Activated B cell treated with CpG ODN at 0.5 μM for 24 hours (primary cell): ENCODE measurements at regions of chr12 and their contacts with region 1.

Region 1: GRCh38 chr12:48795480-48796455 is 6.9 kb upstream of the ADCY6 start:
- DNase-seq: peak; percentile 42
- ATAC-seq: peak; percentile 85
- H3K4me3 Mint-ChIP-seq: no peak overlapping the region
- H3K27ac Mint-ChIP-seq: no peak overlapping the region
- H3K4me1 Mint-ChIP-seq: peaks cover 6% of the 10 kb centered on the region
- H3K27me3 Mint-ChIP-seq: peaks cover 7% of the 10 kb centered on the region
- CTCF ChIP-seq: peak; percentile 44

Region 2: DNA sequence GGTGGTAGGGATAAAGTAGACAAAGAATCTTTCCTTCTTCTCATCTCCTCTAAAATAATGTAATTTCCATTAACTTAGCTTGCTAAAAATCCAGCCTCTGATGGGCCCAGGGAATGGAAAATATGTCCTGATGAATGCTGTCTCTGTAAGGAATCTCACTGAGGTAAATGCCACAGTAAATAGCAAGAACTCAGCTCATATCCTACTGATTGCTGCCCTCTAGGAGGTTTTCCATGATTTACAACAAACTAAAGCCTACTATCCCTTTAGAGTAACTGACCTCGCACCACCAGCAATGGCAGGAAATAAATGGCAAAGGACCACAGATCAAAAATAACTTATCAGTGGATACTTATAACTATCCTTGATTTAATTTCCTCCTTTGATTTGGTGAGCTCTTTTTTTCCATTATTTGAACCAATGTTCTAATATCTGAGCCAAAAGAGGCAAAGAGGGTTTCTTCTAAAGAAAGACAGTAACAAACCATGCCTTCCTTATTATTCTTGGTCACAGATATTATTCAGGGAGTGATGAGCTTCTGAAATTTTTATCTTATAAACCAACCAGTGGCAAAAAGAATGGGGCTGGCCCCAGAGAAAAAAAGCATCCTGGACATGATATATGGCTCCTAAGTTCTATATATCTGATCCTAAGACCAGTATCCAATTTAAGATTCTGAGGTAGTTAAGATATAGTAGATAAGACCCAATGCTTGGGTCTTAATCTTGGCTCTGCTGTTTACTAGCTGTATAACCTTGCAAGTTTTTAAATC is 733.6 kb before region 1 on chr12:
- CTCF ChIA-PET with region 1: no interaction called
- POLR2A ChIA-PET with region 1: no interaction called
- intact Hi-C with region 1: no loop called
- DNase-seq: no peak
- ATAC-seq: no peak
- H3K4me3 Mint-ChIP-seq: no peak overlapping the region
- H3K27ac Mint-ChIP-seq: no peak overlapping the region
- H3K4me1 Mint-ChIP-seq: peaks cover 2% of the 10 kb centered on the region
- H3K27me3 Mint-ChIP-seq: no peaks in the 10 kb centered on the region
- CTCF ChIP-seq: no peak

Region 3: GRCh38 chr12:48542300-48542928 is 253.4 kb before region 1 on chr12:
- CTCF ChIA-PET with region 1: no interaction called
- POLR2A ChIA-PET with region 1: no interaction called
- intact Hi-C with region 1: loop called (anchors 2 kb)
- DNase-seq: no peak
- ATAC-seq: no peak
- H3K4me3 Mint-ChIP-seq: no peak overlapping the region
- H3K27ac Mint-ChIP-seq: no peak overlapping the region
- H3K4me1 Mint-ChIP-seq: no peaks in the 10 kb centered on the region
- H3K27me3 Mint-ChIP-seq: peaks cover 3% of the 10 kb centered on the region
- CTCF ChIP-seq: no peak

Region 4: DNA sequence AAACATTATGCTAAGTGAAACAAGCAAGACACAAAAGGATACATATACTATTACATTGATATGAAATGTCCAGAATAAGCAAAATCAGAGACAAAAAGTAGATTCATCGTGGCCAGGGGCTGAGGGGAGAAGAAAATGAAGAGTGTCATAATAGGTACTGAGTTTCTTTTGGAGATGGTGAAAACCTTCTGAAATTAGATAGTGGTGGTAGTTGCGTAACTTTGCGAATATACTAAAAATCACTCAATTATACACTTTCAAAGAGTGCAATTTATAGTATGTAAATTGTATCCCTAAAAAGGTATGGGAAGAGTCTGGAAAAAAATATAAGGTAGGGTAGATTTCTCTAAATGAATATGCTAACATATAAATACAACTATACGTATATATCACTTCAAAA is 135.9 kb before region 1 on chr12:
- CTCF ChIA-PET with region 1: no interaction called
- POLR2A ChIA-PET with region 1: no interaction called
- intact Hi-C with region 1: no loop called
- DNase-seq: no peak
- ATAC-seq: no peak
- H3K4me3 Mint-ChIP-seq: no peak overlapping the region
- H3K27ac Mint-ChIP-seq: no peak overlapping the region
- H3K4me1 Mint-ChIP-seq: no peaks in the 10 kb centered on the region
- H3K27me3 Mint-ChIP-seq: no peaks in the 10 kb centered on the region
- CTCF ChIP-seq: no peak

Region 5: GRCh38 chr12:48750769-48751735 is 44.7 kb before region 1 on chr12:
- CTCF ChIA-PET with region 1: interaction called, 119 read pairs
- POLR2A ChIA-PET with region 1: interaction called, 14 read pairs
- intact Hi-C with region 1: loop called (anchors 1 kb)
- DNase-seq: no peak
- ATAC-seq: no peak
- H3K4me3 Mint-ChIP-seq: no peak overlapping the region
- H3K27ac Mint-ChIP-seq: no peak overlapping the region
- H3K4me1 Mint-ChIP-seq: no peaks in the 10 kb centered on the region
- H3K27me3 Mint-ChIP-seq: peaks cover 1% of the 10 kb centered on the region
- CTCF ChIP-seq: no peak

Region 6: DNA sequence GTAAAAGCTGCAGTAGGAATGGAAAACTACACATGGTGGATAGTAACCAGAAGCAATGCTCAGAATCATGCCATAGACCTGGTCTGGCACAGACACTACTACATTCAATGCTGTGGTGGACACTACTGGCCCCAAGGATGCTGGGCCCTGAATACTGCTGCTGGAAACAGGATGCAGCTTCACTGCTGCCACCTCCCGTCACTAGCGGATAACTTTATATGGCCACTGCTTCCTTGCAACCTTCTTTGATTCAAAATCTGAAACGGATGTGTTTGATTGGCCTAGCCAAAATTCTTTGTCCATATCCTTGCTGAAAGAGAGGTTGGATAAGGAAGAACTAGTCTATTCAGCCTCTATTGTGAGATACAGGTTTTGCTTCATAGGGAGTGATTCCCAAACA is 37.5 kb before region 1 on chr12:
- CTCF ChIA-PET with region 1: interaction called, 119 read pairs
- POLR2A ChIA-PET with region 1: interaction called, 14 read pairs
- intact Hi-C with region 1: loop called (anchors 1 kb)
- DNase-seq: no peak
- ATAC-seq: no peak
- H3K4me3 Mint-ChIP-seq: no peak overlapping the region
- H3K27ac Mint-ChIP-seq: no peak overlapping the region
- H3K4me1 Mint-ChIP-seq: no peaks in the 10 kb centered on the region
- H3K27me3 Mint-ChIP-seq: no peaks in the 10 kb centered on the region
- CTCF ChIP-seq: no peak

Region 7: DNA sequence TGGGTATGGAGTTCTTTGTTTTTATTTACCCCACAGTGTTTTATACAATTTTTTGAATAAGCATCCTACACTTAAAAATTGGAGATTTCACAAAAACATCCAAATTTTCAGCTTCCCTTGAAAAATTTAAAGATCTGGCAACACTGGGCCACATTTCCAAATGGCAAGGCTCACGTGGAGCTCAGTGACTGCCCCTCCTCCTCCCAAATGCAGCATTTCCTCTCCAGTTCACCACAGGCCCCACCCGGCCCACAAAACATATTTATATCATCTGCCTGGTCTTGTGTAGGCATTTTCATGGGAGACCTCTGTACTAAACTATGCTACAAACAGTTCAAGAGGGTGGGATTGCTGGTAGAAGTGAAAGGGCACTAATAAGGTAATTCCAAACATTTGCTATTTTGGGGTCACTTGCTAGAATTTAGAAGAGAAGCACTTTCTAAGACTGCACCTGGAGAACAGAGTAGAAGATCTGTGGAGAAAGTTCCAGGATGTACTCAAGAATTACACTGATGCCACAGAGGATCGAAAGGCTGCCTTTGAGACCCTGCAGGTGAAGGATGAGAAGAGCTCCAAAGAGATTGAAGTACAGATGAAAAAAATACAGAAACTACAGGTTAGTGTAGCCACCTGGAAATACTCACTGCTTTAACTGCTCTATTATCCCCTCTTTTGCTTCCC is 122.2 kb after region 1 on chr12:
- CTCF ChIA-PET with region 1: no interaction called
- POLR2A ChIA-PET with region 1: no interaction called
- intact Hi-C with region 1: no loop called
- DNase-seq: no peak
- ATAC-seq: no peak
- H3K4me3 Mint-ChIP-seq: peak overlapping the region; percentile 15
- H3K27ac Mint-ChIP-seq: peak overlapping the region; percentile 16
- H3K4me1 Mint-ChIP-seq: peaks cover 21% of the 10 kb centered on the region
- H3K27me3 Mint-ChIP-seq: no peaks in the 10 kb centered on the region
- CTCF ChIP-seq: no peak